PC-3 (cell line): ENCODE measurements at regions of chr9 and their contacts with region 1.

Region 1: GRCh38 chr9:137046098-137046787 is at the start of gene NPDC1:
- DNase-seq: peak; percentile 78
- ATAC-seq: peak; percentile 31
- H3K4me3 ChIP-seq: peak within 1 kb of the TSS; percentile 84
- H3K27ac ChIP-seq: no peak within 1 kb of the TSS
- H3K4me1 ChIP-seq: peaks cover 9% of the 10 kb centered on the region; the same call in 1 of the 2 replicates
- H3K27me3 ChIP-seq: no peaks in the 10 kb centered on the region
- CTCF ChIP-seq: peak; percentile 74
- total RNA-seq, gene NPDC1: 25.4 and 33.3 TPM in 2 replicates

Region 2: GRCh38 chr9:136118320-136119060 is 927.8 kb before region 1 on chr9 and contains the start of gene TMEM250:
- CTCF ChIA-PET with region 1: no interaction called
- POLR2A ChIA-PET with region 1: no interaction called
- intact Hi-C with region 1: no loop called
- DNase-seq: peak; percentile 95
- ATAC-seq: peak; percentile 86
- H3K4me3 ChIP-seq: peak within 1 kb of the TSS; percentile 81
- H3K27ac ChIP-seq: peak within 1 kb of the TSS; percentile 49
- H3K4me1 ChIP-seq: peaks cover 7% of the 10 kb centered on the region; the same call in 1 of the 2 replicates
- H3K27me3 ChIP-seq: no peaks in the 10 kb centered on the region
- CTCF ChIP-seq: no peak
- total RNA-seq, gene TMEM250: 62.3 and 64.7 TPM in 2 replicates

Region 3: DNA sequence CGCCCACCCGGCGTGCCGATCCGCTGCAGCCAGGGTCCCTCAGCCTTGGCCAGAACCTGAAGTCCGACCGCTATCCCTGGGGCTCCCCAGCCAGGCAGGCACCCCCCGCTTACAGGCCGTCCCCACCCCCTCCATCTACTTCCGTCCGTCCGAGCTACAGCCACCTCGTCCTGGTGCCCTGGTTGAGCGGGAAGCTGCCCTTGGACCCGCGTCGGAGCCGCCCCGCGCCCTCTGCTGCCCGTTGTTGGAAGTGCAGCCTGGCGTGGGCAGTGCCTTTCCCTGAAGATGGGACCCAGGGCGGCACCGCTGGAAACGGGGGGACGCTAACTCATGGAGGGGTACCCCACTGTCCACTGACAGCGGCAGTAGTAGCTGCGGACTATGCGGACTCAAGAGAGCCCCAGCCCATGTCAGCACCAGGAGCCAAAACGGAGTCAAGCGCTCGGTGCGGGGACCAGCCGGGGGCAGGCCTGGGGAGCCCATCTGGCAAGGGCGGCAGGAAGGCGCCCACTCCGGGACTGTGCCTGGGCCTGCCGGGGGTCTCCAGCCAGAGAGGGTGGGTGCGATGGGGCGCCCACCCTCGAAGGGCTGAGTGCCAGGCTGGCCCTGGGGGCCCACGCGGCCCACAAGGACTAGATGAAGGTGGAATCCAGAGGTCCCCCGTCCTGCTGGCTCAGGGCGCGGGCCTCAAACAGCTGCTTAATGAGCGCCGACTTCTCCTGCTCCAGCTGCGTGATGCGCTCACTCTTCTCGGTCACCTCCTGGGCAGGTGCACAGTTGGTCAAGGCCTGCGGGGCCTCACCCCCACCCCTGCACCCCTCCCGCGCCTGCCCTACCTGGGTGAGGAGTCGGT is 18.0 kb after region 1 on chr9:
- CTCF ChIA-PET with region 1: interaction called, 16 read pairs
- POLR2A ChIA-PET with region 1: interaction called, 20 read pairs
- intact Hi-C with region 1: loop called (anchors 2 kb)
- DNase-seq: peak; percentile 46
- ATAC-seq: 0 out of 2 replicates have a peak, but pooled peaks have one; percentile 27
- H3K4me3 ChIP-seq: no peak overlapping the region
- H3K27ac ChIP-seq: no peak overlapping the region
- H3K4me1 ChIP-seq: peaks cover 14% of the 10 kb centered on the region
- H3K27me3 ChIP-seq: no peaks in the 10 kb centered on the region
- CTCF ChIP-seq: peak; percentile 70